PC-3 (cell line): ENCODE measurements at regions of chr17 and their contacts with region 1.

Region 1: DNA sequence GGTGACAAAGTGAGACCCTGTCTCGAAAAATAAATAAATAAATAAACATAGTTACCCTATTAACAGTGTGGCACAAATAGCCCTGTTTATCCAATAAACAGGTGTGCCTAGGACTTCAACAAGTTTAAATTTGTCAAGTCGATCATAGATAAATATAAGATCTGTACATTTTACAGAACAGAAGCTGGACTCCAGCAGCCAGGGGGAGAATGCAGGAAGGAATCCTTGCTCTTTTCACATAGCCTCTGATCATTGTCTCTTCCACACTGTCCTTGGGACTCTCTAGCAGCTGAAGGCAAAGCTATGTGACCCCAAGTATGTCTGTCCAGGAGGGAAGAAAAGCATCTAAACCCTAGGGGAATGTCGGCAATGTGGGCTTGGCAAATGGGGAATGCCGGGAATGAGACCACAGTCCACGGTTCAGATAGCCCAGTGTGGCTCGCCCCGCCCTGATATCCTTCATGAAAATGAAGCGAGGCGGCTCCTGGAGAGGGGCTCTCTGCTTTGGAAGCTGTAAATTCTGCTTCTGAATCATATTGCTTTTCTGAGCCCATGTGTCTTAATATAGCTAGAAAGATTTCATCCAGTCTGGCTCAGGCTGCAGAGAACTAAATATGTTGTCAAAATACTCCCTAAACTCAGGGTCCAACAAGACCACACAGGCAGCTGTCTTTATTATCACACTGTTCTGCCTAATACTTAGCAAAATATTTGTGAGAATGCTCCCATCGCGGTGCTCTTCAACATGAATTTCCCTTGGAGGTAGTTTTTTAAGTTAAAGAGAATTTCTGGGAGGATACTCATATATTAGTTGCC is 24.9 kb upstream of the GRB2 start:
- DNase-seq: peak; percentile 19
- ATAC-seq: no peak
- H3K4me3 ChIP-seq: no peak overlapping the region
- H3K27ac ChIP-seq: no peak overlapping the region
- H3K4me1 ChIP-seq: peaks cover 21% of the 10 kb centered on the region
- H3K27me3 ChIP-seq: no peaks in the 10 kb centered on the region
- CTCF ChIP-seq: no peak

Region 2: GRCh38 chr17:75456417-75457046 is 26.2 kb after region 1 on chr17 and contains the start of gene TMEM94:
- CTCF ChIA-PET with region 1: no interaction called
- POLR2A ChIA-PET with region 1: interaction called, 5 read pairs
- intact Hi-C with region 1: loop called (anchors 2 kb)
- DNase-seq: peak; percentile 99
- ATAC-seq: peak; percentile 89
- H3K4me3 ChIP-seq: peak within 1 kb of the TSS; percentile 85
- H3K27ac ChIP-seq: peak within 1 kb of the TSS; percentile 13
- H3K4me1 ChIP-seq: peaks cover 38% of the 10 kb centered on the region
- H3K27me3 ChIP-seq: no peaks in the 10 kb centered on the region
- CTCF ChIP-seq: no peak
- total RNA-seq, gene TMEM94: 45.6 and 88.3 TPM in 2 replicates

Region 3: DNA sequence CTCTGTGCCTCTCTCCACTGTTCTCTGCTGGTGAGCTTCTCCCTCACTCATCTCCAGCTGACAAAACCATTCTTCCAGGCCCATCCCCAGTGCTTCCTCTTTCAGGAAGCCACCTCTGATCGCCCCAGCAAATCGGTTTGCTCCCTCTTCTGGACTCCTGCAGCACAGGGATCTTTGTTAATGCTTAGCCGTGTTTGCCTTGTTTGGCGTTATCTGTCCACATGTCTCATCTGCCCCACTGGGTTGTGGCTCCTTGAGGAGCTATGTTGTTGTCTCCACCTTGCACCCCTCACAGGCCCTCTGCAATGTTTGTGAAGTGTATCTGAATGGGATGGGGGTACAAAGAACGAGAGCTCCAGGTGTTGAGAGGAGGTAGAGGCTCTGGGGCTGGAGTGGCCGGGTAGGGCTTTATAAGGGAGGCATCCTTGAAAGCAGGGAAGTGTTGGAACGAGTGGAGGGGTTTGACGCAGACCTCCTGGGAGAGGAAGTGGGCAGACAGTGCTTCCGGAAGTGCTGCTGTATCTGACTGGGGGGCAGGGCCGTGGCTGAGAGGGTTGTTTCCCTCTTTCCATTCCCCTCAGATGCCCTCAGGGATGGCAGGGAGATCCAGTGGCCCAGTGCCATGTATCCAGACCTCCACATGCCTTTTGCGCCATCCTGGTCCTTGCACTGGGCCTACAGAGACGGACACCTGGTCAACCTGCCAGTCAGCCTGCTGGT is 57.1 kb after region 1 on chr17:
- CTCF ChIA-PET with region 1: no interaction called
- POLR2A ChIA-PET with region 1: no interaction called
- intact Hi-C with region 1: loop called (anchors 1 kb)
- DNase-seq: no peak
- ATAC-seq: no peak
- H3K4me3 ChIP-seq: no peak overlapping the region
- H3K27ac ChIP-seq: no peak overlapping the region
- H3K4me1 ChIP-seq: no peaks in the 10 kb centered on the region
- H3K27me3 ChIP-seq: no peaks in the 10 kb centered on the region
- CTCF ChIP-seq: no peak; the same call in 1 of the 2 replicates

Region 4: DNA sequence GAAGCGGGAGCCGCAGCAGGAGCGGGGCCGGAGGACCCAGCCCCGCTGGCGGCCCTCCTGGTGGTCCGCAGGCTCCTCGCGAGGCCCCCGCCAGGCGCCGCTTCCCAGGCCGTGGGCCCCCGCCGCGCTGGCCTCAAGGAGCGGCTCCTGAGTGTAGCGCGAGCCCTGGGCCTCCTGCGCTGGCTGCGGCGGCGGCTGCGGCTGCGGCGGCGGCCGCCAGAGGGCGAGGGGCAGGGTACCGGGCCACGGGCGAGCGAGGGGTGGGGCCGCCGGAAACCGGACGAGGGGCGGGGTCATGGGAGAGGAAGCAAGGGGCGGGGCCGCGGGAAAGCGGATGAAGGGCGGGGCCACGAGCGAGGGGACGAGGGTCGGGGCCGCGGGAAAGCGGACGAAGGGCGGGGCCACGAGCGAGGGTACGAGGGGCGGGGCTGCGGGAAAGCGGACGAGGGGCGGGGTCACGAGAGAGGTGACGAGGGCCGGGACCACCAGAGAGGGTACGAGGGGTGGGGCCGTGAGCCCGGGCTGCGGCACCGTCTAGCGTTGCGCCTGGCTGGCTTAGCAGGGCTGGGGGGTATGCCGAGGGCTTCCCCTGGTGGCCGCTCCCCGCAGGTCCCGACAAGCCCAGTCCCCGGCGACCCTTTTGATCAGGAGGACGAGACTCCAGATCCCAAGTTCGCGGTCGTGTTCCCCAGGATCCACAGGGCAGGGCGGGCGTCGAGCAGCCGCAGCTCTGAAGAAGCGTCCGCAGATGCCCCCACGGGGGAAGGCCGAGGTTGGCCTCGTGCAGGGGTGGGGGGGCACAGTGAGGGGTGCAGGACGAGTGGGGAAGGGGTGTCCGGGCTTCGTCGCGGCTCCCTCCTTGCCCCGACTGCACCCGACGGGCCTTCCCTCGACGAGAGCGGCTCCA is 158.9 kb after region 1 on chr17:
- CTCF ChIA-PET with region 1: no interaction called
- POLR2A ChIA-PET with region 1: no interaction called
- intact Hi-C with region 1: loop called (anchors 10 kb)
- DNase-seq: peak; percentile 94
- ATAC-seq: peak; percentile 94
- H3K4me3 ChIP-seq: peak overlapping the region; percentile 65
- H3K27ac ChIP-seq: no peak overlapping the region
- H3K4me1 ChIP-seq: peaks cover 10% of the 10 kb centered on the region
- H3K27me3 ChIP-seq: no peaks in the 10 kb centered on the region
- CTCF ChIP-seq: peak; percentile 69